ENCODE measurements at regions of chr7 and their contacts with region 1.

Region 1: GRCh38 chr7:142782922-142783900 is 12.4 kb downstream of the PRSS2 start:
- DNase-seq: peak; percentile 88 to 94 (median 92)
- ATAC-seq: peak; percentile 84 to 99 (median 96)
- H3K4me3 ChIP-seq: peak overlapping the region in 2 of 4 donors; percentile 45 to 50
- H3K27ac ChIP-seq: no peak overlapping the region
- H3K4me1 ChIP-seq: peaks cover 0 to 3% (median 0%) of the 10 kb centered on the region in 3 donors
- H3K27me3 ChIP-seq: no peaks in the 10 kb centered on the region
- CTCF ChIP-seq: peak; percentile 81 to 88 (median 84)

Region 2: GRCh38 chr7:142519083-142520078 is 263.8 kb before region 1 on chr7:
- intact Hi-C with region 1: loop called in 1 of 3 experiments (anchors 10 kb)
- DNase-seq: no peak
- ATAC-seq: no peak
- H3K4me3 ChIP-seq: no peak overlapping the region
- H3K27ac ChIP-seq: peak overlapping the region in 1 of 4 donors; percentile 15
- H3K4me1 ChIP-seq: peaks cover 0 to 3% (median 0%) of the 10 kb centered on the region in 3 donors
- H3K27me3 ChIP-seq: no peaks in the 10 kb centered on the region
- CTCF ChIP-seq: no peak

Region 3: GRCh38 chr7:142632291-142633134 is 150.7 kb before region 1 on chr7:
- intact Hi-C with region 1: loop called in 1 of 3 experiments (anchors 10 kb)
- DNase-seq: peak; percentile 33 to 77 (median 58)
- ATAC-seq: peak; percentile 81 to 95 (median 92)
- H3K4me3 ChIP-seq: no peak overlapping the region
- H3K27ac ChIP-seq: no peak overlapping the region
- H3K4me1 ChIP-seq: peaks cover 0 to 3% (median 0%) of the 10 kb centered on the region in 3 donors
- H3K27me3 ChIP-seq: no peaks in the 10 kb centered on the region
- CTCF ChIP-seq: peak; percentile 67 to 83 (median 70)

Region 4: GRCh38 chr7:142669074-142669654 is 114.0 kb before region 1 on chr7:
- intact Hi-C with region 1: loop called in 1 of 3 experiments (anchors 5 kb)
- DNase-seq: no peak
- ATAC-seq: peak; percentile 59 to 84 (median 77)
- H3K4me3 ChIP-seq: no peak overlapping the region
- H3K27ac ChIP-seq: no peak overlapping the region
- H3K4me1 ChIP-seq: peaks cover 0 to 3% (median 0%) of the 10 kb centered on the region in 3 donors
- H3K27me3 ChIP-seq: no peaks in the 10 kb centered on the region
- CTCF ChIP-seq: peak; percentile 11 to 43 (median 26)

Region 5: GRCh38 chr7:142813237-142813636 is 30.0 kb after region 1 on chr7:
- intact Hi-C with region 1: no loop called
- DNase-seq: no peak
- ATAC-seq: peak; percentile 38 to 56 (median 50)
- H3K4me3 ChIP-seq: no peak overlapping the region
- H3K27ac ChIP-seq: no peak overlapping the region
- H3K4me1 ChIP-seq: no peaks in the 10 kb centered on the region
- H3K27me3 ChIP-seq: no peaks in the 10 kb centered on the region
- CTCF ChIP-seq: no peak

Region 6: GRCh38 chr7:142885284-142886230 is 102.3 kb after region 1 on chr7 and contains the start of gene TRPV6:
- intact Hi-C with region 1: no loop called
- DNase-seq: peak; percentile 68 to 89 (median 83)
- ATAC-seq: peak; percentile 86 to 90 (median 89)
- H3K4me3 ChIP-seq: peak within 1 kb of the TSS; percentile 21 to 46 (median 32)
- H3K27ac ChIP-seq: peak within 1 kb of the TSS; percentile 36 to 73 (median 63)
- H3K4me1 ChIP-seq: no peaks in the 10 kb centered on the region
- H3K27me3 ChIP-seq: no peaks in the 10 kb centered on the region
- CTCF ChIP-seq: no peak
- total RNA-seq, gene TRPV6: 36.1 to 67.4 (median 47.5) TPM

Measured in pancreas (tissue), 10 donors.